MCF 10A (cell line): ENCODE measurements at regions of chr7 and their contacts with region 1.

Region 1: DNA sequence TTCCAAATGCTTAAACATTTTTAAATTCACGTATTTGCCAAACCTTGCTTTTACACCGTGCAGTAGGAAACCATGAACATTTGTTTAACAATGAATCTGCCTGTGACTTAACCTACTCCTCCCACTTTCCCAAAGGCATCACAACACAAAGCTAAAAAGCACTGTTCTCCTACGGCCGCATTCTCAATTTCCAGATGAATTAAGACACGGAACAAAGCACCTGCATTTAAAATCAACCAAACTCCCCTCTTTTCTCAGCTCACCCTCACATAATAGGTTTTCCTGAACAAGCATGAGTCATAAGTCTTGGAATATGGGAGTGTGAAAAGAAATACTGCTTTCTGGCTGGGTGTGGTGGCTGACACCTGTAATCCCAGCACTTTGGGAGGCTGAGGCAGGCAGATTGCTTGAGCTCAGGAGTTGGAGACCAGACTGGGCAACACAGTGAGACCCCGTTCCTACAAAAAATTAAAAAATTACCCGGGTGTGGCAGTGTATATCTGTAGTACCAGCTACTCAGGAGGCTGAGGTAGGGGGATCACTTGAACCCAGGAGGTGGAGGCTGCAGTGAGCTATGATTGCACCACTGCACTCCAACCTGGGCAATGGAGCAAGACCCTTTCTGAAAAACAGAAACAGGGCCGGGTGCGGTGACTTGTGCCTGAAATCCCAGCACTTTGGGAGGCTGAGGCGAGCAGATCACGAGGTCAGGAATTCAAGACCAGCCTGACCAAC is 51.7 kb upstream of the CYTH3 start:
- DNase-seq: no peak
- H3K4me3 Mint-ChIP-seq: no peak overlapping the region
- H3K27ac Mint-ChIP-seq: no peak overlapping the region
- H3K4me1 Mint-ChIP-seq: peaks cover 5% of the 10 kb centered on the region
- H3K27me3 Mint-ChIP-seq: no peaks in the 10 kb centered on the region
- CTCF ChIP-seq: no peak

Region 2: GRCh38 chr7:5854738-5855137 is 469.4 kb before region 1 on chr7:
- CTCF ChIA-PET with region 1: interaction called, 12 read pairs
- POLR2A ChIA-PET with region 1: no interaction called
- intact Hi-C with region 1: no loop called
- DNase-seq: no peak
- H3K4me3 Mint-ChIP-seq: no peak overlapping the region
- H3K27ac Mint-ChIP-seq: no peak overlapping the region
- H3K4me1 Mint-ChIP-seq: no peaks in the 10 kb centered on the region
- H3K27me3 Mint-ChIP-seq: no peaks in the 10 kb centered on the region
- CTCF ChIP-seq: no peak

Region 3: DNA sequence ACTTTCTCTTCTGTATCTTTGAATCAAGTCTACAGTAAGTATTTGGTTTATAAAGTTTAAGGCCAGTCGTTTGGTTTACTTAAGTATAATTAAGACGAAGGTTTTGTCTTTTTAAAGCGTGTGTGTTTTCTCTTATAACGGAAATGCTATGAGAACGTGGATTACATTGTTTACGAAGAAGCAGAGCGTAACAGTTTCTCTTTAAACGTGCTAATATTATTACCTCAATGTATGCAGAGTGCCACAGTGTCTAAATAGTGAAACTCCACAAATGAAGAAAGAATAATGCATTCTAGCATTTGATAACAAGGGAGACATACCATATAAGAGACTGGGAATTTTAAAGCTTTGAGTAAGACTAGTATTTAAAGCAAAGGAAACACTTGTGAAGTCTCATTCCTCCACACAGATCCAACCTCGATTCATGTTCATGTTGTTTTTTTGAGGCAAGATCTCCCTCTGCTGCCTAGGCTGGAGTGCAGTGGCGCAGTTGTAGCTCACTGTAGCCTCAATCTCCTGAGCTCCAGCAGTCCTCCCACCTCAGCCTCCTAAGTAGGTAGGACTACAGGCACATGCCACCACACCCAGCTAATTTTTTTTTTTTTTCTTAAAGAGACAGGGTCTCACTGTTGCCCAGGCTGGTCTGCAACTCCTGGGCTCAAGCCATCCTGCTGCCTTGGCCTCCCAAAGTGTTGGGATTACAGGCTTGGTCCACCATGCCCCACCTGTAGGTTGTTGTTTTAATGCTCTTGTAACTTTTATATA is 217.8 kb before region 1 on chr7:
- CTCF ChIA-PET with region 1: interaction called, 5 read pairs
- POLR2A ChIA-PET with region 1: interaction called, 4 read pairs
- intact Hi-C with region 1: loop called (anchors 1 kb)
- DNase-seq: peak; percentile 67
- H3K4me3 Mint-ChIP-seq: peak overlapping the region; percentile 77
- H3K27ac Mint-ChIP-seq: peak overlapping the region; percentile 61
- H3K4me1 Mint-ChIP-seq: peaks cover 11% of the 10 kb centered on the region
- H3K27me3 Mint-ChIP-seq: no peaks in the 10 kb centered on the region
- CTCF ChIP-seq: no peak

Region 4: DNA sequence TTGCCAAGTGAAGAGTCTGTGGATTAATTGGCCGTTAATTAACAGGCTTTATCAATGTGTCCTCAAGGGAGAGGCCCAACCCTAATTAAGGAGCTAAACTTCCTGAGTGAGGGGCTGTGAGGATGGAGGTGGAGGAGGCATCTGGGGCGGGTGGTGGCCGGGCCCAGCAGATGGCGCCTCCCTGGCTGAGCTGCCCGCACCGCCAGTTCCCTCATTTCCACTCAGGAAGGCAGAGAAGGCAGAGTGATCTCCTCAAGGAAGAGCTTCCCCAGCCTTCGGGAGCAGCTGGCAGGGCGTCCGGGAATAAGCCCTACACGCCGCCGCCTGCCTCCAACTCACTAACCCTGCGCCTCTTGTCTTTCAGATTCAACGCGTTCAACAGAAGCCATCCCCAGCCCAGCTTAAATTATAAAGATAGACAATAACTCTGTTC is 163.9 kb before region 1 on chr7:
- CTCF ChIA-PET with region 1: interaction called, 37 read pairs
- POLR2A ChIA-PET with region 1: interaction called, 3 read pairs
- intact Hi-C with region 1: loop called (anchors 1 kb)
- DNase-seq: peak; percentile 13
- H3K4me3 Mint-ChIP-seq: no peak overlapping the region
- H3K27ac Mint-ChIP-seq: no peak overlapping the region
- H3K4me1 Mint-ChIP-seq: no peaks in the 10 kb centered on the region
- H3K27me3 Mint-ChIP-seq: no peaks in the 10 kb centered on the region
- CTCF ChIP-seq: peak; percentile 35

Region 5: DNA sequence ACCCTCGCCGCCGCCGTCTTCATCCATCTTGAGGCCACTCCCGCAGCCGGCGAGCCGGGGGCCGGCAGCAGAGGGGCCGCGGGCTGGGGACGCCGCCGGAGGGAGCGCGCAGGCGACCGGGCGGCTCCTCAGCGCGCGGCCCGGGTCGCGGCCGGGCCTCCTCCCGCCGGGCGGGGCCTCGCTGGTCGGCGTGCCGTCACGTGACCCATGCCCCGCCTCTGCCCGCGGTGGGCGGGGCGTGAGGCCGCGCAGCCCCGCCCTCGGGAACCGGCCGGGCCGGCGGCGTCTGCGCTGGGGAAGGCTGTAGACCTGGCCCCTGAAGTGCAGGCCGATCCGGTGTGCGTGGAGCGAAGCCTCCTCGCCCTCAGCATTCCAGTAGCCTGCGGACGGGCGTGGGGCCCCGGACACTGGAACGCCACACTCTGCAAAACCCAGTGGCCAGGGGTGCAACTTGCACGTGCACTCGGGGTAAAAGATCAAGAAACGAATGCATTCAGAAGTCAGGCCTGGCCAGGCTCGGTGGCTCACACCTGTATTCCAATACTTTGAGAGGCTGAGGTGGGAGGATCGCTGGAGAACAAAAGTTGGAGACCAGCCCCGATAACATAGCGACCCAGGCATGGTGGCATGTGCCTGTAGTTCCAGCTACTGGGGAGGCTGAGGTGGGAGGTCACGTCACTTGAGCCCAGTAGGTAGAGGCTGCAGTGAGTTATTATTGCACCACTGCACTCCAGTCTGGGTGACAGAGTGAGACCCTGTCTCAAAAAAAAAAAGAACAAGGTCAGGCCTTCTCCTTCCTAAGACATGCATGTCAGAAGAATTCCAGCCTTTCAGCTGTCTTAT is 51.4 kb before region 1 on chr7 and contains the start of gene CYTH3:
- CTCF ChIA-PET with region 1: no interaction called
- POLR2A ChIA-PET with region 1: no interaction called
- intact Hi-C with region 1: loop called (anchors 2 kb)
- DNase-seq: peak; percentile 70
- H3K4me3 Mint-ChIP-seq: peak within 1 kb of the TSS; percentile 83
- H3K27ac Mint-ChIP-seq: peak within 1 kb of the TSS; percentile 50
- H3K4me1 Mint-ChIP-seq: peaks cover 24% of the 10 kb centered on the region
- H3K27me3 Mint-ChIP-seq: no peaks in the 10 kb centered on the region
- CTCF ChIP-seq: no peak
- total RNA-seq, gene CYTH3: 19.3 and 23.5 TPM in 2 replicates

Region 6: GRCh38 chr7:6375348-6376101 is 51.4 kb after region 1 on chr7:
- CTCF ChIA-PET with region 1: no interaction called
- POLR2A ChIA-PET with region 1: no interaction called
- intact Hi-C with region 1: no loop called
- DNase-seq: peak; percentile 40
- H3K4me3 Mint-ChIP-seq: peak overlapping the region; percentile 95
- H3K27ac Mint-ChIP-seq: peak overlapping the region; percentile 92
- H3K4me1 Mint-ChIP-seq: peaks cover 23% of the 10 kb centered on the region
- H3K27me3 Mint-ChIP-seq: no peaks in the 10 kb centered on the region
- CTCF ChIP-seq: no peak

Region 7: GRCh38 chr7:6475433-6476186 is 151.5 kb after region 1 on chr7:
- CTCF ChIA-PET with region 1: no interaction called
- POLR2A ChIA-PET with region 1: no interaction called
- intact Hi-C with region 1: no loop called
- DNase-seq: no peak
- H3K4me3 Mint-ChIP-seq: no peak overlapping the region
- H3K27ac Mint-ChIP-seq: no peak overlapping the region
- H3K4me1 Mint-ChIP-seq: peaks cover 16% of the 10 kb centered on the region
- H3K27me3 Mint-ChIP-seq: no peaks in the 10 kb centered on the region
- CTCF ChIP-seq: no peak